CD8-positive, alpha-beta T cell (primary cell): ENCODE measurements at regions of chr13 and their contacts with region 1.

Region 1: DNA sequence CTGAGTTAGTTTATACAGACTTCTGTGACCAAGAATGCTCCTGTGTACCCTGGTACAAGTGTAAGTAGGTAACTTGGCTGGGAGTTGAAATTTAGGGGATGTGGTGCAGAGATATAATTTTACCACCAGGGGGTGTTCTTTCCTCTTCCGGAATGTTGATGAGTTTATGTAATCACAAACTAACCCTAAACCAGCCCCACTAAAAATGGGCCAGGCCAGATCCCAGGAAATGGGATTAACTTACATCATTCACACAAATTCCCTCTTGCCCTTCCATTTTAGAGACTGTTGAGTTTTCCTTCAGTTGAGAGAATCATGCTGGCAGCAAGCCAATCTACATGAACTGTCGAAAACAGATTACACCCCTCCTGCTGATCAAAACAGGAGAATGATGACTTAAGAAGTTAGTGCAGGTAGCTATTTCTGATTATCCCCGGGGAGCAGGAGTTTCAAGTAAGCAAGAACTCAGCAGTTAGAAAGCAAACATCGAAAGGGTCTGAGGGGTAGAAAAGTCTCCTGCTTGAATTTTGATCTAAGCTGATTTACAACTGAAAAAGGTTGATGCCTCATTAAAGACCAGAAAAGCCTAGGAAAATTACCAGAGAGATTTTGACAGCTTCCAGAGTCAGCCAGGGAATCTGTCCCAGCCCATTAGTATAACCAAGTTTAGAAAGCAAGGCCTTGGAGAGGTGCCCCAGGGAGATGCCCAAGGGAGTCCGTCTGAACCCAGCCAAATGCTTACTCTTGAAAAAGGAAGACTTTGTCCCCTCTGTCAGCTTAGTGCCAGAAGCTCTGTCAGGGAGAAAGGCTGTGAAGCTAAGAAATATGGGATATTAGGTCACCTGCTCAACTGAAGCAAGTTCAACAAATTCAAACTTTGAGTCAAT is 32.3 kb upstream of the MED4 start:
- DNase-seq: peak; percentile 11 to 84 (median 39)
- ATAC-seq: peak; percentile 93
- H3K4me3 ChIP-seq: peak overlapping the region in 1 of 2 experiments; percentile 6
- H3K4me3 Mint-ChIP-seq: peak overlapping the region; percentile 55
- H3K27ac ChIP-seq: peak overlapping the region; percentile 30 to 75
- H3K27ac Mint-ChIP-seq: peak overlapping the region; percentile 94
- H3K4me1 ChIP-seq: peaks cover 13% of the 10 kb centered on the region
- H3K4me1 Mint-ChIP-seq: peaks cover 31% of the 10 kb centered on the region
- H3K27me3 ChIP-seq: no peaks in the 10 kb centered on the region
- H3K27me3 Mint-ChIP-seq: no peaks in the 10 kb centered on the region
- CTCF ChIP-seq: peak; percentile 80

Region 2: GRCh38 chr13:48155848-48156247 is 28.7 kb after region 1 on chr13:
- CTCF ChIA-PET with region 1: interaction called, 16 read pairs
- POLR2A ChIA-PET with region 1: interaction called, 9 read pairs
- intact Hi-C with region 1: loop called (anchors 1 kb)
- DNase-seq: peak in 6 of 9 experiments; percentile 14 to 90 (median 46)
- ATAC-seq: peak; percentile 71
- H3K4me3 ChIP-seq: peak overlapping the region in 1 of 2 experiments; percentile 37
- H3K4me3 Mint-ChIP-seq: peak overlapping the region; percentile 44
- H3K27ac ChIP-seq: peak overlapping the region; percentile 61 to 89
- H3K27ac Mint-ChIP-seq: peak overlapping the region; percentile 96
- H3K4me1 ChIP-seq: peaks cover 75% of the 10 kb centered on the region
- H3K4me1 Mint-ChIP-seq: peaks cover 81% of the 10 kb centered on the region
- H3K27me3 ChIP-seq: no peaks in the 10 kb centered on the region
- H3K27me3 Mint-ChIP-seq: no peaks in the 10 kb centered on the region
- CTCF ChIP-seq: no peak

Region 3: GRCh38 chr13:48194379-48194754 is 67.2 kb after region 1 on chr13:
- CTCF ChIA-PET with region 1: interaction called, 8 read pairs
- POLR2A ChIA-PET with region 1: interaction called, 3 read pairs
- intact Hi-C with region 1: loop called in 1 of 2 experiments (anchors 5 kb)
- DNase-seq: peak in 2 of 9 experiments; percentile 8 to 53
- ATAC-seq: no peak
- H3K4me3 ChIP-seq: no peak overlapping the region
- H3K4me3 Mint-ChIP-seq: no peak overlapping the region
- H3K27ac ChIP-seq: no peak overlapping the region
- H3K27ac Mint-ChIP-seq: no peak overlapping the region
- H3K4me1 ChIP-seq: peaks cover 25% of the 10 kb centered on the region
- H3K4me1 Mint-ChIP-seq: peaks cover 35% of the 10 kb centered on the region
- H3K27me3 ChIP-seq: no peaks in the 10 kb centered on the region
- H3K27me3 Mint-ChIP-seq: no peaks in the 10 kb centered on the region
- CTCF ChIP-seq: no peak

Region 4: GRCh38 chr13:48265217-48265815 is 138.1 kb after region 1 on chr13:
- CTCF ChIA-PET with region 1: interaction called, 13 read pairs
- POLR2A ChIA-PET with region 1: interaction called, 3 read pairs
- intact Hi-C with region 1: no loop called
- DNase-seq: peak in 3 of 9 experiments; percentile 10 to 33 (median 27)
- ATAC-seq: peak; percentile 59
- H3K4me3 ChIP-seq: no peak overlapping the region
- H3K4me3 Mint-ChIP-seq: peak overlapping the region; percentile 38
- H3K27ac ChIP-seq: peak overlapping the region in 1 of 2 experiments; percentile 54
- H3K27ac Mint-ChIP-seq: peak overlapping the region; percentile 90
- H3K4me1 ChIP-seq: peaks cover 28% of the 10 kb centered on the region
- H3K4me1 Mint-ChIP-seq: peaks cover 57% of the 10 kb centered on the region
- H3K27me3 ChIP-seq: no peaks in the 10 kb centered on the region
- H3K27me3 Mint-ChIP-seq: no peaks in the 10 kb centered on the region
- CTCF ChIP-seq: no peak

Region 5: GRCh38 chr13:48580185-48580803 is 453.1 kb after region 1 on chr13:
- CTCF ChIA-PET with region 1: interaction called, 11 read pairs
- POLR2A ChIA-PET with region 1: no interaction called
- intact Hi-C with region 1: loop called (anchors 1 to 2 kb)
- DNase-seq: peak; percentile 50 to 82 (median 79)
- ATAC-seq: peak; percentile 79
- H3K4me3 ChIP-seq: no peak overlapping the region
- H3K4me3 Mint-ChIP-seq: no peak overlapping the region
- H3K27ac ChIP-seq: no peak overlapping the region
- H3K27ac Mint-ChIP-seq: no peak overlapping the region
- H3K4me1 ChIP-seq: no peaks in the 10 kb centered on the region
- H3K4me1 Mint-ChIP-seq: peaks cover 3% of the 10 kb centered on the region
- H3K27me3 ChIP-seq: no peaks in the 10 kb centered on the region
- H3K27me3 Mint-ChIP-seq: peaks cover 30% of the 10 kb centered on the region
- CTCF ChIP-seq: peak; percentile 85